ENCODE measurements at regions of chr20 and their contacts with region 1.

Region 1: GRCh38 chr20:21571841-21572690 is 58.2 kb upstream of the NKX2-2 start:
- H3K4me3 ChIP-seq: no peak overlapping the region
- H3K27ac ChIP-seq: no peak overlapping the region
- H3K4me1 ChIP-seq: no peaks in the 10 kb centered on the region
- CTCF ChIP-seq: peak; percentile 50

Region 2: DNA sequence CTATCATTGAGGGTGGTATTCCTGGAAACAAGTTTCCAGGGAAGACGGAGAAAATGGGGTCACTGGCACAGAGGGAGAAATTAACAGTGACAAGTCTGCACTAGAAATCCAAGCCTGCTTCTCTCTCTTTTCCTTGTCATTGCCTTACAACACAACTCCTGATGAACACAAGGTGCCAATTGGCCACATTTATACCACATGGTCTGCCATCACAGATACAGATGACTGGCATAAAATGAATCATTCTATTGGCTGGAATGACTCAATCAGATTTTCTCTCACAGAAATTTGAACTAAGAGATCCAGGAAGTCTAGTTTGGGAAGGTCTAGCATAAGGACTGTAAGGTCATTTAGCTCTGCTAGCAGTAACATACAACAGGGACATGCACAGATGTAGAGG is 656.2 kb before region 1 on chr20:
- CTCF ChIA-PET with region 1: no interaction called
- POLR2A ChIA-PET with region 1: no interaction called
- H3K4me3 ChIP-seq: no peak overlapping the region
- H3K27ac ChIP-seq: no peak overlapping the region
- H3K4me1 ChIP-seq: no peaks in the 10 kb centered on the region
- CTCF ChIP-seq: no peak

Region 3: DNA sequence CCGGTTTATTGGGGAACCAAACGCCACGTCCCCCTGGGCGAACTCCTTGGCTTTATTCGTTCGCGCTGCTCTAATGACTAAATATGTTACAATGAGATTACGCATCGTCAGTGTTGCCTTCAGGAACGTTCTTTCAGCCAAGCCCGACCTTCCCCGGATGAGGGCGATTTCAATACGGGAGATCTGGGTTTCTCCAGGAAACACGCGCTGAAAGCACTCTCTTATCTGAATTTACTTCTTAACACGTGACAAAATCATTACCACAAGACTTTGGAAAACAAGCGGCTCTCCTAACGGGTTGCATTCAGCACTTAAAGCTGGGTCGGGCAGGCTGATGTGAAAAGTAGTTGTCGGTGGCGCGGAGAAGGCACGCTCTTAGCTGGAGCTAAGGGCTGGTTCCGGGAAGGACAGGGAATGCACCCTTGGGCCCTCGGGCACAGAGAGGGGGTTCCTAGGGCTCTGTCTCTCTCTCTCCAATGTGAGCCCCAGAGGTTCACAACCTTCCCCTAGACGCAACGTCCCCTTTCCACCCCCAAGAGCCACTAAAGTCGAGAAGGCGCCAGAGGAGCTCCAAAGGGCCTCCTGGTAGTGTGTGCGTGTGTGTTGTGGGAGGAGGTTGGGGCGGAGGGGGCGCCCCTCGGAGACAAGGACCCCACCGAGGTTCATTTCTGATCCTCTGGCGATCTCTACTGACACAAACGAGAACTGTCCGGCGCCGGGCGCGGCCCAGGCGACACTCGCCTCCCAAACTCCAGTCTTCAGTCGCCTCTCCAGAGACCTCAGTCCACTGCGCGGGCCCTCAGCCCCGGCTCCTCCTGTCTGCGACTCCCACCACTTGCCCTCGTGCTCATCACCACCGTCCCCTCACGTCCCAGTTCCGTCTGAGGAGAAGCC is 51.1 kb before region 1 on chr20:
- CTCF ChIA-PET with region 1: interaction called, 13 read pairs
- POLR2A ChIA-PET with region 1: no interaction called
- H3K4me3 ChIP-seq: peak overlapping the region; percentile 50
- H3K27ac ChIP-seq: peak overlapping the region; percentile 72; the same call in 1 of the 2 replicates
- H3K4me1 ChIP-seq: peaks cover 3% of the 10 kb centered on the region; the same call in 1 of the 2 replicates
- CTCF ChIP-seq: peak; percentile 94

Region 4: DNA sequence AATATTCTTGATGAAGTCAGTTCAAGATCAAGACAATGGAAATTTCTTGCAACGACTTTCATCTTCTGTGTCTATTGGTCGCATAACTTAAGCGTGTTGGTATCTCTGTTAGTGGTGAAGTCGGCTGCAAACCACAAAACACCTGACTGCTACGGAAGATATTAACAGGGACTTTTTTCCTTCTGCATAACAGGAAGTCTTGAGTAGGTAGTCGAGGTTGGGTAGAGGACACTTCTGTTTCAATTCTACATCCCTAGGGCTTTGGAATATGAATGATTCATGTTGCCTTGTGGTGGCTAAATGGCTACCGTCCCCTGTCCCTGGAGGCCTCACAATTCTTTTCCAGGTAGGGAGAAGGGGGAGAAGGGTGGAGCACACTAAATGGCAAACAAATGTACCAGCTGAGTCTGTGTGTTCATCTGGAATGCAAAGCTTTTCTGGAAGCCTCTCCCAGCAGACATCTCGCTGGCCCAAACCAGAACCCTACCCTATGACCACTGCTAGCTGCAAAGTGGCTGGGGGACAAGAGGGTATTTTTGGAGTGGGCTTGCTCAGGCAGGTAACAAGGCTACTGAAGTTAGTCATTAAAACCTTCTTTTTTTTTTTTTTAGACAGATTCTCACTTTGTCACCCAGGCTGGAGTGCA is 23.6 kb before region 1 on chr20:
- CTCF ChIA-PET with region 1: interaction called, 10 read pairs
- POLR2A ChIA-PET with region 1: no interaction called
- H3K4me3 ChIP-seq: no peak overlapping the region
- H3K27ac ChIP-seq: no peak overlapping the region
- H3K4me1 ChIP-seq: no peaks in the 10 kb centered on the region
- CTCF ChIP-seq: no peak

Region 5: DNA sequence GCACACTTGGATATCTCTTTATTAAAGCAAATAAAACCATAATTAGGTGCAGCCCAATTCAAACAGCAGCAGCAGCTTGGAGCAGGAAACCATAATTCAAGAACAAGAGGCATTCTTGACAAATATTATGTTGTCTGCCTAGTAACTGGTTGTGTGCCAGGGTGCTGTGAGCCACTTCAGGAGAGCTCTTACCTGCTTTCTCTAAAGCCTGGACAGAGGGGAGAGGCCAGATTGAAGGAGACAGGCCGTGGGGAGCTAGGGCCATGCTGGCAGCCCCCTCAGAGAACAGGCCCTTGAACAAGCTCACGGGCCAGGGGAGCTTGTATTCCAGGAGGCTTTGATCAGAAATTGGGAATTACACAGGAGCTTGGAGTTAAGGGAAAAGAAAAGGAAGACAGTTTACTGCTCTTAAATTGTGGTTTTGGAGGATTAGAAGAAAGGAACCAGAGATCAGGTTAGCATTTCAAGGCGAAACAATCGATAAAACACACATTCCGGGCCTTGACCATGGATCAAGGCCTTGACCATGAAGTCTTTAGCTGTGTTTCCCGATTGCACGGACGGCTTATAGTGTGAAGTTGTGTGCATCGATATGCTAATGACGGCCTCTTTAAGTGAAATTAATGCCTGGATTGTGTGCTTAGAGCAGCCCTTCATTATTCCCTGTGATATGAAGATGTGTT is 11.6 kb after region 1 on chr20:
- CTCF ChIA-PET with region 1: interaction called, 13 read pairs
- POLR2A ChIA-PET with region 1: no interaction called
- H3K4me3 ChIP-seq: no peak overlapping the region
- H3K27ac ChIP-seq: no peak overlapping the region
- H3K4me1 ChIP-seq: no peaks in the 10 kb centered on the region
- CTCF ChIP-seq: no peak

Region 6: GRCh38 chr20:21739682-21740081 is 167.6 kb after region 1 on chr20:
- CTCF ChIA-PET with region 1: no interaction called
- POLR2A ChIA-PET with region 1: no interaction called
- H3K4me3 ChIP-seq: no peak overlapping the region
- H3K27ac ChIP-seq: no peak overlapping the region
- H3K4me1 ChIP-seq: no peaks in the 10 kb centered on the region
- CTCF ChIP-seq: no peak

Region 7: DNA sequence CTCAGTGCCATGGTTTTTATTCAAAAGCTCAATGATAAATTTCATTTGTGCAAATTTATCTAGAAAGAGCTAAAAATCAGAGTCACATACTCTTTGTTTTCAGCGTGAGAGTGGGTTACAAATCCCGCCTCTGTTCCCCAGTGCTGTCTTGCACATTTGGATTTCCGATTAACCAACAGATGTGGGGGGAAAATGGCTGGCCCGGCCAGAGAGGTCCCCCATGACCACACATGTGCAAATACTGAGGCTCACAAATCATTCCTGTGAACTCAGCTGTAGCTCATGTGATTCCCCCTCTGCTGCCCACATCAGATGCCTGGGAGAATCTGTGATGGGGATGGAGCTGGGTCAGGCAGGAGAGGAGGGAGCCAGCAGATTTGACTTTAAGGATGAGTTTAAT is 302.1 kb after region 1 on chr20:
- CTCF ChIA-PET with region 1: no interaction called
- POLR2A ChIA-PET with region 1: no interaction called
- H3K4me3 ChIP-seq: no peak overlapping the region
- H3K27ac ChIP-seq: no peak overlapping the region
- H3K4me1 ChIP-seq: no peaks in the 10 kb centered on the region
- CTCF ChIP-seq: no peak

Measured in HEK293 (cell line).